Left ventricle myocardium inferior (tissue), 1 donor: ENCODE measurements at regions of chr22 and their contacts with region 1.

Region 1: DNA sequence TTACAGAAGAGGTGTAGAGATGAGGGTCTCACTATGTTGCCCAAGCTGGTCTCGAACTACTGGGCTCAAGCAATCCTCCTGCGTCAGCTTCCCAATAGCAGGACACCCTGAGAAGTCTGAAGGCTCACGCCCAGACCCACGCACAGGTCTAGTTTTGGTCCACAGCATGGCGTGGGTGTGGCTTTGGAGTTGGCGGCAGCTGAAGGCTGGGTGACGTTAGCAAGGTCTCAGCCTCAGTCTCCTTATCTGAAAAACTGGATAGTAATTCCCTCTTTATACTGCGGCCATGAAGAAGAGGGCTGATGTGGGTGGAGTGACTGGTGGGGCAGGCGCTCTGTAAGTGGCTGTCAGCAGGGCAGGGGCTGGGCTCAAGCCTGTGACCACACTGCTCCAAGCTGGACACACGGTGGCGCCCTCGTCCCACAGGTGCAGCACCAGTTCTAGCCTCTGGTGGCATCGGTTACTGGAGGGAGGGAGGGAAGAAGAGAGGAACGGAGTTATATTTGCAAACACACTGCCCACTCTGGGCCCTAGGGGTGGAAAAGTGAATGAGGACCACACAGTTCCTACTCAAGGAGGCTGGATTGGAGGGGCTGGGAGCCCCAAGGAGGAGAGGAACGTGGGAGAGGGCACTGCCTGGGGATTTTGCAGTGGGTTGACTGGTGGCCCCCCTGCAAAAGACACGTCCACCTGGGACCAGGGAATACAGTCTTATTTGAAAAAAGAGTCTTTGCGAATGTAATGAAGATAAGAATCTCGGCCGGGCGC is 19.6 kb upstream of the CARD10 start:
- DNase-seq: peak; percentile 92
- H3K4me3 ChIP-seq: no peak overlapping the region
- H3K27ac ChIP-seq: peak overlapping the region; percentile 49
- H3K4me1 ChIP-seq: peaks cover 10% of the 10 kb centered on the region
- H3K27me3 ChIP-seq: no peaks in the 10 kb centered on the region
- CTCF ChIP-seq: peak; percentile 97

Region 2: GRCh38 chr22:37591823-37592404 is 53.1 kb after region 1 on chr22:
- intact Hi-C with region 1: loop called (anchors 2 kb)
- DNase-seq: no peak
- H3K4me3 ChIP-seq: peak overlapping the region; percentile 26
- H3K27ac ChIP-seq: peak overlapping the region; percentile 10
- H3K4me1 ChIP-seq: peaks cover 9% of the 10 kb centered on the region
- H3K27me3 ChIP-seq: peaks cover 9% of the 10 kb centered on the region
- CTCF ChIP-seq: no peak

Region 3: DNA sequence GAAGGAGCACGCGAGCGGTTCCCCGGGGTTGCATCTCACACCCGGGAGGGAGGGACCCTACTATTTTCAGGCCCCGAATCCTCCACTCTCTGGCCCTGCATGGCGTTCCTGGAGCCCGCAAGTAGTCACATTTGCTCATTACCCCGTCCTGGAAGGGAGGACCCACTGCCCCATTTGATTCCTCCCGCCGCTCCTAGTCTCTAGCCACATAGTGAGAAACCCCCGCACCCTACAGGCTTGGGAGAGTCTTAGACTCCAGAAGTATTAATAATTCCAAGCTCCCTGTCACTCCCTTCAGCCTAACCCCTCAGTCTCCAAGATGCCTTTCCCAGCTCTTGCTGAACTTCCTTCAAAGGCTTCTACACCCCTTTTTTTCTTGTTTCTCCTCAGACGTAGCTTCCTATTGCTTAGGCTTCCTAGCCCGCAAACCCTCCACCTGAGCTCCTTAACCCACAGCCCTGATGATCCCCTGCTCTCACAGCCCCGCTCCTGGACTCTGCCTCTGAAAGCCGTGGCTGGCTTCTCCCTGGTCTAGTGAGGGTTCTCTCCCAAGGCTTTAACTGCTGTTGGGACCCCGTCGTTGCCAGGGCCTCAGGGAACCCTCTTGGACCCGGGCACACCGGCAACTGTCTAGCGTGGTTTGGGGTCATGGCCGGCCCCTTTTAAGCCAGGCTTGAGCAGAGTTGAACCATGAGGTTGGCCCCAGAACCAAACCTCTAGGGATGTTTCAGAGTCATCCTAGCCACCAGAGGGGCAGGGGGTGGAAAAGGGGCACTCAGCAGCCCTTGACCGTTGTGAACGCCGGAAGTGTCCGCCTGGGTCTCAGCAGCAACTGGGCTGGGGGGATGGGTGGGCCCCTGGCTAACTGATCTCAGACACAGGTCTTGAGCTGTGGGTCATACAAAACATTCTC is 70.7 kb after region 1 on chr22:
- intact Hi-C with region 1: no loop called
- DNase-seq: no peak
- H3K4me3 ChIP-seq: peak overlapping the region; percentile 92
- H3K27ac ChIP-seq: peak overlapping the region; percentile 98
- H3K4me1 ChIP-seq: peaks cover 51% of the 10 kb centered on the region
- H3K27me3 ChIP-seq: no peaks in the 10 kb centered on the region
- CTCF ChIP-seq: no peak